B cell (primary cell): ENCODE measurements at regions of chr15 and their contacts with region 1.

Region 1: GRCh38 chr15:57152666-57153539 is 223.4 kb upstream of the CGNL1 start:
- DNase-seq: no peak
- ATAC-seq: no peak
- H3K4me3 ChIP-seq: no peak overlapping the region
- H3K4me3 Mint-ChIP-seq: no peak overlapping the region
- H3K27ac ChIP-seq: no peak overlapping the region
- H3K27ac Mint-ChIP-seq: peak overlapping the region; percentile 28
- H3K4me1 ChIP-seq: peaks cover 4% of the 10 kb centered on the region in 2 donors
- H3K4me1 Mint-ChIP-seq: peaks cover 18% of the 10 kb centered on the region
- H3K27me3 ChIP-seq: no peaks in the 10 kb centered on the region
- H3K27me3 Mint-ChIP-seq: no peaks in the 10 kb centered on the region
- CTCF ChIP-seq: no peak

Region 2: DNA sequence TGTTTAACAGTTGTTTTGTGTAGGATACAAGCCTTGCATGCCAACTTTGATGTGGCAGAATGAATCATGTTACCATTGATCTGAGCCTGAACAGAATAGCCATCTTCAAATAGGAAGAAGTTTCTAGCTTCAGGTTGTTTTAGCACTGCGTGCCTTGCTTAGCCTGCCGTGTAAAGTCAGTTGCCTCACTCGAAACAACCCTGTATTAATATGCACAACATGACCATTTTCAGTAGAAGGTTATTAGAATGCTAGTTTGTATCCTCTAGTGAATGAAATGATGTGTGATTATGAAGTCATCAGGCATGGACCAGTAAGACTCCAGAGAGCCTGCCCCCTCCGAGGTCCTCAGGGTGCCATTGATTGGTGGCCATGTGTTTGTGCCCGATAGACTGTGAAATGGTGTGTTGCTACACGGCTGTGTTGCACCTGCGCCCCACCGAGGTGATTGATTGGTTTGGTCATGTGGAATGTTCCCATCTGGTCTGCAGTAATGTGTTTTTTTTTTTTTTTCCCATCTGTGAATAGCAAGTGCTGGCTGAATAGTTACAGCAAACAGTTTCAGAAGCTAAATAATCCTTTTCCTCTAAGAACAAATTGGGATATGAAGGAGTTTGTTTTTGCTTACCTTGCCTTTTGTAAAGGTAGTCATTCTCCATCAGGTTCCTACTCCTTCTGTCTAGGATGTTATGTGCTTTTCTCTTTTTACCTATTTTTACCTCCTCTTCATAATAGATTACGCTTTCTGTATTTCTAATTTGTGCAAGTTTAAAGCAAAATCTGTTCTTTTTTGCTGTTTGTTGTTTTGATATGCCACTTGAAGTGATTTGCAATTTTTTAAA is 19.6 kb before region 1 on chr15:
- CTCF ChIA-PET with region 1: interaction called, 17 read pairs
- POLR2A ChIA-PET with region 1: no interaction called
- intact Hi-C with region 1: loop called (anchors 2 kb)
- DNase-seq: peak; percentile 43
- ATAC-seq: peak; percentile 49
- H3K4me3 ChIP-seq: no peak overlapping the region
- H3K4me3 Mint-ChIP-seq: peak overlapping the region; percentile 55
- H3K27ac ChIP-seq: no peak overlapping the region
- H3K27ac Mint-ChIP-seq: no peak overlapping the region
- H3K4me1 ChIP-seq: peaks cover 6 to 14% of the 10 kb centered on the region in 2 donors
- H3K4me1 Mint-ChIP-seq: peaks cover 36% of the 10 kb centered on the region
- H3K27me3 ChIP-seq: no peaks in the 10 kb centered on the region
- H3K27me3 Mint-ChIP-seq: no peaks in the 10 kb centered on the region
- CTCF ChIP-seq: no peak